ENCODE measurements at regions of chr1 and their contacts with region 1.

Region 1: GRCh38 chr1:32773018-32773763 is 44.0 kb downstream of the YARS1 start:
- H3K4me3 ChIP-seq: no peak overlapping the region
- H3K27ac ChIP-seq: no peak overlapping the region
- H3K4me1 ChIP-seq: no peaks in the 10 kb centered on the region
- CTCF ChIP-seq: peak; percentile 93

Region 2: GRCh38 chr1:32400876-32401631 is 372.1 kb before region 1 on chr1:
- CTCF ChIA-PET with region 1: interaction called, 22 read pairs
- POLR2A ChIA-PET with region 1: no interaction called
- H3K4me3 ChIP-seq: no peak overlapping the region
- H3K27ac ChIP-seq: no peak overlapping the region
- H3K4me1 ChIP-seq: no peaks in the 10 kb centered on the region
- CTCF ChIP-seq: peak; percentile 81

Region 3: DNA sequence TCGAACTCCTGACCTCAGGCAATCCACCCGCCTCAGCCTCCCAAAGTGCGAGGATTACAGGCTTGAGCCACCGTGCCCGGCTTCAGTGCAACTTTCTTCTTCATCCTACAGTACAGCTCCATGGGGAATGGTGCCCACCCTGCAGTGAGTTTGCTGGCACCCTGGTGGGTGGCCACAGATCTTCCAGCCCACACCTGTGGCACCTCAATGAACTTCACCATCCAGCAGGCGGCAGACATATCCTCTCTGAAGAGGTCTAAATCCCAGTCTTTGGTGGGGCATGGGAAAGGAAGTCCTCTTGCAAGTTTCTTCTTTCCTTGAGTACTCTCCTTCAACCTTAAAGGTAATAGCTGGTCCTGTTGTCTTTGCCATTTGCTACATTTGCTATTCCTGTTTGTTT is 252.0 kb before region 1 on chr1:
- CTCF ChIA-PET with region 1: interaction called, 18 read pairs
- POLR2A ChIA-PET with region 1: interaction called, 4 read pairs
- H3K4me3 ChIP-seq: no peak overlapping the region
- H3K27ac ChIP-seq: no peak overlapping the region
- H3K4me1 ChIP-seq: no peaks in the 10 kb centered on the region
- CTCF ChIP-seq: no peak

Region 4: GRCh38 chr1:32702599-32703478 is 70.4 kb before region 1 on chr1 and contains the start of gene SYNC:
- CTCF ChIA-PET with region 1: interaction called, 24 read pairs
- POLR2A ChIA-PET with region 1: interaction called, 3 read pairs
- H3K4me3 ChIP-seq: peak within 1 kb of the TSS; percentile 41
- H3K27ac ChIP-seq: peak within 1 kb of the TSS; percentile 40; the same call in 1 of the 2 replicates
- H3K4me1 ChIP-seq: peaks cover 7% of the 10 kb centered on the region
- CTCF ChIP-seq: no peak

Region 5: GRCh38 chr1:32753532-32754312 is 19.5 kb before region 1 on chr1:
- CTCF ChIA-PET with region 1: interaction called, 10 read pairs
- POLR2A ChIA-PET with region 1: interaction called, 15 read pairs
- H3K4me3 ChIP-seq: peak overlapping the region; percentile 43
- H3K27ac ChIP-seq: no peak overlapping the region
- H3K4me1 ChIP-seq: peaks cover 2% of the 10 kb centered on the region; the same call in 1 of the 2 replicates
- CTCF ChIP-seq: no peak

Region 6: GRCh38 chr1:32761253-32761880 is 11.8 kb before region 1 on chr1:
- CTCF ChIA-PET with region 1: interaction called, 10 read pairs
- POLR2A ChIA-PET with region 1: interaction called, 5 read pairs
- H3K4me3 ChIP-seq: no peak overlapping the region
- H3K27ac ChIP-seq: no peak overlapping the region
- H3K4me1 ChIP-seq: peaks cover 15% of the 10 kb centered on the region
- CTCF ChIP-seq: no peak

Region 7: DNA sequence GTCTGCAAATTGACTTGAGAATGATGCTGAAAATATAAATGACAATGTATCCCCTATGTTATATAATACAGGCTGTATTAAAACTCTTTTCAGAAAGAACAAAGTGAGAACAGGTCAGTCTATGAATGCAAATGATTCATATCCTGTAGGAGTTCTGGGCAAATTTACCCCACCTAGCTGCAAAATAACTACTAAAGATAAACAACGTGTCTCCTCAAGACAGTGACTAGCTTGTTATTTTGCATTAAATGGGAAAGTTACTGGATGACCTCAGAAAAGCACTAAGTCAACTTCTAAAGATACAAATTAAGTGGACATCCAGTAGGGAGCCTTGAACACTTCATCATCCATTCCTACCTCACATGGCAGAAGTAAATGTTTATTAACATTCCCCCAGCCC is 180.3 kb after region 1 on chr1:
- CTCF ChIA-PET with region 1: no interaction called
- POLR2A ChIA-PET with region 1: interaction called, 12 read pairs
- H3K4me3 ChIP-seq: no peak overlapping the region
- H3K27ac ChIP-seq: no peak overlapping the region
- H3K4me1 ChIP-seq: peaks cover 8% of the 10 kb centered on the region; the same call in 1 of the 2 replicates
- CTCF ChIP-seq: no peak

Measured in HEK293 (cell line).